ENCODE measurements at regions of chr7 and their contacts with region 1.

Region 1: DNA sequence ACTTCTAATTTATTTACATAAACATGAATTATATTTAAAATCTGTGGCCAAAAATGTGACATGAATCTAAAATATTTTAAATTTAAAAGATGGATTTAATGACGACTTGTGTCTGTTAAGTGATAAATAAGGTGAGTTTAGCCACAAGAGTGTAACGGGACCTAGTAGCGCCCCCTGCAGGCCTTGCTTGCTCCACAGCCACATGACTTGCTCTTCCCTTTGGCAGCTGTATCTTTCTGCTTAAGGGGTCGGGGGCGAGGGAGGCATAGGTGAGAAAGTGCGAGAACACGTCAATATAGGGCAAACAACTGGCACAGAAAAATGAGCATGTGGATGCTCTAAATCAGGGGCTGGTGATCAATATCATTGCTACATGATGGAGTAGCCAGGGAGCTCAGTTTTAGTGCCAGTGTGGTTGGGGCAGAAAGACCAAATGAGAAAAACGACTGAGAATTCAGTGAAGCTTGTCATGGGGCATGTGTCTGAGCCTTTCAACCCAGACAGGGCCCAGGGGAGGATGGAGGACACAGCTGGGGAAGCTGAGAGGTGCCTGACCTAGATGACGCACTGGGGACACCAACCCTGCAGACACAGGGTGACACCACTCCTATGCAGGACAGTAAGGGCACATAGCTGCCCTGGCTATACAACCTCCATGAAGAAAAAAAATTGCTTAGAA is 49.8 kb downstream of the PAXIP1 start:
- H3K4me3 ChIP-seq: no peak overlapping the region
- H3K27ac ChIP-seq: no peak overlapping the region
- H3K4me1 ChIP-seq: no peaks in the 10 kb centered on the region
- CTCF ChIP-seq: peak; percentile 36; the same call in 1 of the 2 replicates

Region 2: GRCh38 chr7:154832557-154833138 is 120.5 kb before region 1 on chr7:
- CTCF ChIA-PET with region 1: interaction called, 14 read pairs
- POLR2A ChIA-PET with region 1: no interaction called
- H3K4me3 ChIP-seq: no peak overlapping the region
- H3K27ac ChIP-seq: no peak overlapping the region
- H3K4me1 ChIP-seq: no peaks in the 10 kb centered on the region
- CTCF ChIP-seq: peak; percentile 84

Region 3: GRCh38 chr7:154927624-154928143 is 25.5 kb before region 1 on chr7:
- CTCF ChIA-PET with region 1: interaction called, 31 read pairs
- POLR2A ChIA-PET with region 1: no interaction called
- H3K4me3 ChIP-seq: peak overlapping the region; percentile 41
- H3K27ac ChIP-seq: no peak overlapping the region
- H3K4me1 ChIP-seq: no peaks in the 10 kb centered on the region
- CTCF ChIP-seq: peak; percentile 39; the same call in 1 of the 2 replicates

Region 4: DNA sequence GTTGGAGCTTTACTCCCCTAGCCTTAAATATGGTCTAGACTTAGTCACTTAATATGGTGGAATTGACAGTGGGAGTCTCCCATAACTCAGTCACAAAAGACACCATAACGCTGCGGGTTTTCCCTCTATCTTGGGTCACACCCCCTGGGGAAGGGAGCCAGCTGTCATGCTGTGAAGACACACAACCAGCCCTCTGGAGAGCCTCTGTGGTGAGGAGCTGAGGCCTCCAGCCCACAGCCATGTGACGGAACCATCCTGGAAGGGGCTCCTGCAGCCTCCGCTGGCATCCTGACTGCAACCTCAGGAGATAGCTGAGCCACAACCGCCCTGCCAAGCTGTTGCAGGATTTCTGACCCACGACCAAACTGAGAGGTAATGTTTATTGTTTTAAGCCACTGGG is 11.9 kb after region 1 on chr7:
- CTCF ChIA-PET with region 1: interaction called, 15 read pairs
- POLR2A ChIA-PET with region 1: no interaction called
- H3K4me3 ChIP-seq: no peak overlapping the region
- H3K27ac ChIP-seq: no peak overlapping the region
- H3K4me1 ChIP-seq: no peaks in the 10 kb centered on the region
- CTCF ChIP-seq: no peak

Region 5: GRCh38 chr7:154990964-154991540 is 37.9 kb after region 1 on chr7:
- CTCF ChIA-PET with region 1: interaction called, 11 read pairs
- POLR2A ChIA-PET with region 1: no interaction called
- H3K4me3 ChIP-seq: no peak overlapping the region
- H3K27ac ChIP-seq: no peak overlapping the region
- H3K4me1 ChIP-seq: no peaks in the 10 kb centered on the region
- CTCF ChIP-seq: no peak